OCI-LY7 (cell line): ENCODE measurements at regions of chr12 and their contacts with region 1.

Region 1: GRCh38 chr12:15584366-15585041 is 204.7 kb downstream of the EPS8 start:
- DNase-seq: peak; percentile 71
- H3K4me3 ChIP-seq: no peak overlapping the region
- H3K27ac ChIP-seq: no peak overlapping the region
- H3K4me1 ChIP-seq: no peaks in the 10 kb centered on the region
- CTCF ChIP-seq: peak; percentile 91

Region 2: DNA sequence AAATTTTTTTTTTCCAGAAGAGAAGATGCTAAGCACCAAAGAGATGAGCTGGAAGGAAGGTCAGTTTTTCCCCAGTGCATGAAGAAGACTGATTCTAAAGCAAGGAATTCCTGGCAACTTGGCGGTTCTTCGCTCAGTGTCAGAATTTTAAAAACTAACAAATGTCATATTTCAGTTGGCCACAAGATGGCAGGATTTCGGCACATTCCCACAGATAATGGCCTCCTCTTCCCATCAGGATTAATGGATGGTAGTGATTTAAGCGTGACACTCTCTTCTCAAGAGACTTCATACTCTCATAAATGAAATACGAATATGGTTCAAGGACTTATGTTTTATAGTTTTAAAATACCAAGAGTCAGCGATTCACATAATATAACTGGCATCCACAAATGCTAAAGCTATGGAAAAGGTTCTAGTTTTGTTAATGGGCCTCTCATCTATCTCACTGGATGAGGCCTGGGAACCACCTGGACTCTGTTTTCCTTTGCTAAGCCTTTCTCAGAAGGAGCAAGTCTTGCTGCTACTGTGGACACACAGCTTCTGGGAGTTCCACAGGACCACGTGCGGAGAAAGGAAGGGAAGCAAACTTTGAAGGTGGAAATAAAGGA is 308.3 kb before region 1 on chr12:
- CTCF ChIA-PET with region 1: no interaction called
- POLR2A ChIA-PET with region 1: no interaction called
- intact Hi-C with region 1: loop called (anchors 5 kb)
- DNase-seq: peak; percentile 14
- H3K4me3 ChIP-seq: no peak overlapping the region
- H3K27ac ChIP-seq: no peak overlapping the region
- H3K4me1 ChIP-seq: no peaks in the 10 kb centered on the region
- CTCF ChIP-seq: peak; percentile 90